ENCODE measurements at regions of chr18 and their contacts with region 1.

Region 1: GRCh38 chr18:32158108-32158624 is 31.7 kb upstream of the MEP1B start:
- DNase-seq: peak; percentile 78
- ATAC-seq: peak; percentile 95

Region 2: GRCh38 chr18:32271672-32272208 is 113.6 kb after region 1 on chr18:
- intact Hi-C with region 1: loop called (anchors 5 kb)
- DNase-seq: no peak
- ATAC-seq: peak; percentile 67

Region 3: DNA sequence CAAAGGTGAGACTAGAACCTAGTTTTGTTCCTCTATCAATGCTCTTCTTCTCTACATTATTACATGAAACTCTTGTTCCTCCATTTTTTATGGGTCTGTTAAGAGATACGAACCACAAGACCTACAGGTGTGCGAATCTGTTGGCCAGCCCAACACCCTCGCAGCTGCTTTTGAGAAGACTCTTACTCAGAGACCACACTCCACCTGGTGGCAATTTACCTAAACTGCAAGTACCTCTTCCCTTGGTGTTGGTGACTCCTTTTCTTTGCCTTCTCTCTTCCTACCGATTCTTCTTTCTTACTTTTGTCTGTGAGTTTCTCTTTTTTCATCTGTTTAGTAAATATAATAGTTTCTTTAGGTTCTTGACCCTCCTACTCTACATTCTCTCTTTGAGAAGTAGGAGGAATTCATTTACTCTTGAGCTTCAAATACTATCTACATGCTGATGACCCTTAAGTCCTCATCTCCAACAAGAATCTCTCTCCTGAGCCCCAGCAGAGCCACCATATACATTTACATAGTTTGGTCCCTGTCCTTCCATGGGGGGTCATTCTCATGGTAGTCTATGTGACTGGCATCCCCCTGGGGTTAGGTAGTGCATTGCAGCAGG is 394.4 kb after region 1 on chr18:
- intact Hi-C with region 1: loop called (anchors 1 kb)
- DNase-seq: no peak
- ATAC-seq: peak; percentile 68